HEK293 (cell line): ENCODE measurements at regions of chr17 and their contacts with region 1.

Region 1: GRCh38 chr17:79393358-79394202 is 217.3 kb downstream of the RBFOX3 start:
- H3K4me3 ChIP-seq: no peak overlapping the region
- H3K27ac ChIP-seq: no peak overlapping the region
- H3K4me1 ChIP-seq: no peaks in the 10 kb centered on the region
- CTCF ChIP-seq: peak; percentile 87

Region 2: DNA sequence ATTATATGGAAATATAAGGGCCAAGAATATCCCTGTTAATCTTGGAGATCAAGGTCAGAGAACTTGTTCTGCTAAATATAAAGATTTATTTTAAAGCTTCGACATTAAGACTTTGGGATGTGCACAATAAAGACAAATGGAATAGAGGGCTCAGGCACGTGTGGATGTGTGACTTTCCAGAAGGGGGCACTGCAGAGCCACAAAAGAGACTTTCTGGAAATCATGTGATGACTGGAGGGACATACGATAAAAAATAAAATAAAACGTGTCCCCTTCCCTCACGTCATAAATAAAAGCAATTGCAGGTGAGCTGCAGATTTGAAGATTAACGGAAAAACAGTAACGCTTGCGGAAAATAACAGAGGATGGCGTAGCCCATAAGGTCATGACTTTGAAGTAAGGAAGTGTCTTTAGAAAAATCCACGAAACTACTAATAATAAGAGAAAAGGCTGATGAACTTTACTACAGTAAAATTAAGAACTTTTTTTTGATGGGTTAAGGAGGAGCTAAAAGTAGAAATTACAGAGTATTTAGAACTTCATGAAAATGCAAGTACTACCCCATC is 328.4 kb before region 1 on chr17:
- CTCF ChIA-PET with region 1: interaction called, 94 read pairs
- POLR2A ChIA-PET with region 1: no interaction called
- H3K4me3 ChIP-seq: no peak overlapping the region
- H3K27ac ChIP-seq: no peak overlapping the region
- H3K4me1 ChIP-seq: no peaks in the 10 kb centered on the region
- CTCF ChIP-seq: no peak

Region 3: DNA sequence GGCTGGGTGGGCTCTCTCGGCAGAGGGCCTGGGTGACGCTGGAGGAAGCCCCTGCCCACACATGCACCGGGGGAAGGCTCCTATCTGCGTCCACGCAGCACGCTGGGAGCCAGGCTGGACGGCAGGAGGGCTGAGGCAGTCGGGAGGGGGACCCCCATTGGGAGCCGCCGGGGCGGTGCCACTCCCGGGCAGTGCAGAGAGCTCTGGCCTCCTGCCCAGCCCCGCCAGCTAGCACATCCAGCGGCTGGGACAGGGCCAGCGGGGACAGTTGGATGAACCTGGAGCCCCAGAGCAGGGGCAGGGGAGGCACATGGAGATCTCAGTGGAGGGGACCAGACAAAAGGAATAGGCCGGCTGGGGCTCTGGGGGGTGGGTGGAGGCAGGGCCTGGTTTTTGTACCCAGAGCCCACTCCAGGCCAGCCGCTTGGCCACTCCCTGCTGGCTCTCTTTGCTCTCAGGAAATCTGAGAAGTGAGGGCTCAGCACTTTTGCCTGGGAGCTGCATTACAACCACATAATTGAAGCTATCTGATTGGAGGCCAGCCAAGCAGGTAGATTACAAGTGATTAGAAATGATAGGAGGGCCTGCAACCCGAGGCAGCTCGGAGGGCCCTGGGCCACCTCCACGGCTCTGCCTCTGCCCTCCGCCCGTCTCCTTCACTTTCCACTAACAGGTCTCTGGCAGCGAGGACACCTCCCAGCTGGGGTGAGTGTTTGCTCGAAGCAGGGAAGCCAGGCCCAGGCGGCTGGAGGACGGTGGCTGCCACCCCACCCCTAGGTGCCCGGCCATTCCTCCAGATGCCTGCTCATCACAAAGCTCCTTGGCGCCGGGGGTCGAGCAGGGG is 278.9 kb before region 1 on chr17:
- CTCF ChIA-PET with region 1: interaction called, 20 read pairs
- POLR2A ChIA-PET with region 1: no interaction called
- H3K4me3 ChIP-seq: no peak overlapping the region
- H3K27ac ChIP-seq: peak overlapping the region; percentile 77
- H3K4me1 ChIP-seq: peaks cover 14% of the 10 kb centered on the region
- CTCF ChIP-seq: no peak

Region 4: DNA sequence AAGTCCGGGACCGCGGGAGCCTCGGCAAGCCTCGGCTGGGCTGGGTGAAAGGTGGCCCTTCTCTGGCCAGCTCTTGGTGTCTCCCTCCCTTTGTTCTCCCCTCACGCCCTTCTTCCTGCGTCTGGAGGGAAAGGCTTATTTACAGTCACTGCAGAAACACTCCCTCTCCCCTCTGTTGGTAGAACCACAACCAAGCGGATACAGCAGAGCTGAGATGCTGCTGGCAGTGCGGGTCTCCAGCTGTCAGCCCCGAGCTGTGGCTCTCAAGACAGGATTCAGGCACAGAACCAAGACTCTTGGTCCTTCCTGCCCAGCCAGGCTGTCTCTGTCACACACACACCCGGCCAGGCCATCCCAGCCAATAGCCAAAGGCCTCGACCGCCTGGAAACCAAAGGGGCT is 185.6 kb before region 1 on chr17:
- CTCF ChIA-PET with region 1: interaction called, 12 read pairs
- POLR2A ChIA-PET with region 1: no interaction called
- H3K4me3 ChIP-seq: no peak overlapping the region
- H3K27ac ChIP-seq: no peak overlapping the region
- H3K4me1 ChIP-seq: no peaks in the 10 kb centered on the region
- CTCF ChIP-seq: no peak

Region 5: GRCh38 chr17:79528592-79529125 is 135.1 kb after region 1 on chr17:
- CTCF ChIA-PET with region 1: no interaction called
- POLR2A ChIA-PET with region 1: no interaction called
- H3K4me3 ChIP-seq: no peak overlapping the region
- H3K27ac ChIP-seq: no peak overlapping the region
- H3K4me1 ChIP-seq: no peaks in the 10 kb centered on the region
- CTCF ChIP-seq: no peak

Region 6: DNA sequence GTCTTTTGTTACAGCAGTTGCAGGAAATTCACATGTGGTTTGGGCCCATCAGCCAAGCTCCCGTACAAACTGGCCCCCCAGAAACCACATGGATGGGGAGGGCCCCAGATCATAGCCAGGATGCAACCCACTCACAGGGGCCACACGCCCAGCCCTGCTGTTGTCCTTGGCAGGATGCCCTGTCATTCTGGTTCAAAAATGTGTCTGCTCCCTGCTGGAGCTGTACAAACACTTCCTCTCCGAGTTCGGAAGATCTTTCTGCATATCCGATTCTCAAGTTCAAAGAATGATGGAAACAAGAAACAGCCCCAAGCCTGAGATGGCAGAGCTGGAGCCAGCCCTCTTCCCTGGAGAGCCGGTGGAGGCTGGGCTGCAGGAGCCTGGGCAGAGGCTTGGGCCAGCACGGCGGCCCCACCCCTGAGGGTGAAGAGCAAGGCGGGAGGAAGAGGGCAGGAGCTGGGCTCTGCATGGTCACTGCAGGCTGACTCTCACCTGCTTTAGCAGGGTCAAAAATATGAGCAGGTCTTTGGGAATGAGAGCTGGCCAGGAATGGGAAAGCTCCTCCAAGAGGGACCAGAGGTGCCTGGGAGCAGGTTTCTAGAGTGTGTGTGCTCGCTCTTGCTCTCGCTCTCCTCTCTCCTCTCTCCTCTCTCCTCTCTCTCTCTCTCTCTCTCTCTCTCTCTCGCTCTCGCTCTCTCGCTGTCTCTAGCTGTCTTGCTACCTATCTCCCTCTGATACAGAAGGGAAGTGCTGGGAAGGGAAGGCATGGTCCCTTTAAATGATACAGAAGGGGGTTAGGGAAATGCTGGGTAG is 302.4 kb after region 1 on chr17:
- CTCF ChIA-PET with region 1: interaction called, 23 read pairs
- POLR2A ChIA-PET with region 1: no interaction called
- H3K4me3 ChIP-seq: no peak overlapping the region
- H3K27ac ChIP-seq: peak overlapping the region; percentile 24; the same call in 1 of the 2 replicates
- H3K4me1 ChIP-seq: peaks cover 13% of the 10 kb centered on the region
- CTCF ChIP-seq: no peak